ENCODE measurements at regions of chr1 and their contacts with region 1.

Region 1: DNA sequence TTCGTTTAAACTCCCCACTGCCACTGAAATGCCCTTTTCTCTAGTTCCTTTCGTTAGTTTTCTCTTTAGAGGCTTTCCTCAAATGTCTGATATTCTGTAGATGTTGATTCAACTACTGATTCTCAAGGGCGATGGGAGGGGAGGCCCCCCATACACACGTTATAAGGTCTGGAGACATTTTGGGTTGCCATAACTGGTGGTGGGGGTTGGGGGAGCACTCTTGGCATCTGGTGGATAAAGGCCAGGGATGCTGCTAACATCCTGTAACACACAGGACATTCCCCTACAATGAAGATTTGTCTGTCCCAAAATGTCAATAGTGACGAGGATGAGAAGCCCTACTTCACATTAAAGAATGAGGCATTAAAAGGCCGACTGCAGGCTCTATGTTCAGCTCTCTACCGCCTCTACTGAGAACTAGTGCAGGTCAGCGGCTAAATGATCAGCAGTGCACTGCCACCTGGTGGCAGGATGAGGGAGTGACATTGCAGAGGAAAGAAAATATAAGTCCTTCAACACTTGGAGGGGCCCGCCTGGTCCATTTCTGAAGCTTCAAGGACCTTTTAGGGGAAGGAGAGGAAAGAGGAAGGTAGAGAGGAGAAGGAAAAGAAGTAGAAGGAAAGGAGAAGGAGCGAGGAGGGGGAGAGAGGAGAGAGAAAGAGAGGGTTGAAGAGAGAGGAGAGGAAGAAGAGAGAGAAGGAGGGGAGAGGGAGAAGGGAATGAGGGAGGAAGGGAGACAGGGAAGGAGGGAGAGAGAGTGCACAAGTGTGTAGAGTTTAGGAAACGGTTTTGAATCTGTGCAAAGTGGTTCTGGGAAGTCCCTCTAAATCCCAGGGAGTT is 29.4 kb downstream of the ALG14 start:
- DNase-seq: peak; percentile 82 to 85
- H3K4me3 ChIP-seq: no peak overlapping the region
- H3K27ac ChIP-seq: peak overlapping the region in 2 of 3 donors; percentile 43 to 64
- H3K4me1 ChIP-seq: peaks cover 0 to 11% of the 10 kb centered on the region in 2 donors
- H3K27me3 ChIP-seq: no peaks in the 10 kb centered on the region
- CTCF ChIP-seq: peak; percentile 94 to 100 (median 98)
- POLR2A ChIP-seq: no peak

Region 2: DNA sequence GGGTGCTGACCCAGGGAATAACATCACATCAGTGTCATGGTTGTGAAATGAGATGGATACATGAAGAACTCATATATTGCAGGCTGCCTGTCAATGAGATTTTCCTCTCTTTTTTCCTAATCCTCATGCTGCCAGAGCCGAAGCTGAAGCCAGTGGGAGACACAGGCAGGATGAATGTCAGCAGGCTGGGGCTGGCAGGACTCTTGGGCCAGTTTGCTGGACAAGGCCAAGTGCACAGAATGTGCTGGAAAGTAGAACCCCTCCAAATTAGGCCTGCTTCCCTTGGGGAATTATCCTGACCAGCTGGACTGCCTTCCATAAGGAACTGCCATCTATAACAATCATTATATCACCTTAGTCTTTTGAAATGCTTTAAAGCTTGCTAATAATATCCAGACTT is 191.8 kb before region 1 on chr1:
- intact Hi-C with region 1: loop called (anchors 2 kb)
- DNase-seq: no peak
- H3K4me3 ChIP-seq: no peak overlapping the region
- H3K27ac ChIP-seq: no peak overlapping the region
- H3K4me1 ChIP-seq: peaks cover 7 to 14% of the 10 kb centered on the region in 2 donors
- H3K27me3 ChIP-seq: no peaks in the 10 kb centered on the region
- CTCF ChIP-seq: no peak
- POLR2A ChIP-seq: no peak

Region 3: GRCh38 chr1:94926915-94927404 is 116.4 kb before region 1 on chr1 and contains the start of gene CNN3:
- intact Hi-C with region 1: loop called (anchors 5 kb)
- DNase-seq: peak; percentile 94 to 95
- H3K4me3 ChIP-seq: peak within 1 kb of the TSS; percentile 42 to 97 (median 81)
- H3K27ac ChIP-seq: peak within 1 kb of the TSS; percentile 92 to 99 (median 98)
- H3K4me1 ChIP-seq: peaks cover 42 to 54% of the 10 kb centered on the region in 2 donors
- H3K27me3 ChIP-seq: no peaks in the 10 kb centered on the region
- CTCF ChIP-seq: no peak
- POLR2A ChIP-seq: peak; percentile 95 to 99
- total RNA-seq, gene CNN3: 149 to 257 (median 177) TPM

Measured in thyroid gland (tissue), 4 donors.